ENCODE measurements at regions of chr4 and their contacts with region 1.

Region 1: DNA sequence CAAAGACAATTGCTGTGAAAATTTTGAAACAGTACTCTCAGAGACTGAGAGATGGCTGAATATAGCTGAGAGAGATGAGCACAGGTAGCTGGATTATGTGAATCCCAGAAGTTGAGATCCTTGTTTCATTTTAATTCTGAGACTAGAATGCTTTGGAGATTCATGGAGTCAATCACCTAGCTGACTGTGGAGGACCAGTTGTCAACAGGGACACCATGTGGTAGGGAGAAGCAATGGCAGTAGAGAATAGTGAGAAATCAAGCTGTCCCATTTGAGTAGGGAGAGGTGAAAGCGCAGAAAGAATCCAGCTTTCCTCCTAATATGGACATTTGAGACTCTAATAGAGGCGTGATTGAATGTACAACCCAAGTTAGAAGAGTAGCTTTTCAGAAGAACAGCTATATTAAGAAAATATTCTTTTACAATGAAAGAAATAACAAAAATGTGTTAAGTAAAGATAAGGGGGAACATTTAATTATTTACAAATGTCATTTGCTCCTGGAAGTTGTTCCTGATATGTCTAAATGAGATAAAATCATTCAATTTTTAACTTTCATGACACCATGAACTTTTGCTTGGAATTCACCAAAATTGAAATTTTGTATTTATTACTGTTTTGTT is 30.3 kb upstream of the GLRB start:
- DNase-seq: peak; percentile 84
- H3K4me3 Mint-ChIP-seq: no peak overlapping the region
- H3K27ac Mint-ChIP-seq: peak overlapping the region; percentile 55
- H3K4me1 Mint-ChIP-seq: peaks cover 22% of the 10 kb centered on the region
- H3K27me3 Mint-ChIP-seq: no peaks in the 10 kb centered on the region
- CTCF ChIP-seq: peak; percentile 89

Region 2: DNA sequence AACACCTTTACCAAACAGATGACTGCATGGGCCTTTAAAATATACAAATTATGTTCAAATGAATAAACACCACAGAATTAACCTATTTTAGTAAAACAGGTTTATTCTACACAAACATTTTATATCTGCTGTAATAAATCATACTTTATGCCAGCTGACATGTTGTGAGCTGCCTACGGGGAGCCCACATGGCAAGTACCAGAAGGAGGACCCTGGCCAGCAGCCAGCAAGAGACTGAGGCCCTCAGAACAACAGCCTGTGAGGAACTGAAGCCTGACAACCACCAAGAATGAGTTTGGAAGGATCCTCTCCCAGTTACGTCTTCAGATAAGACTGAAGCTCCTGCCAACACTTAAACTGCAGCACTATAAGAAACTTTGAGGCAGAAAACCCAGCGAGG is 451.0 kb before region 1 on chr4:
- CTCF ChIA-PET with region 1: interaction called, 3 read pairs
- POLR2A ChIA-PET with region 1: no interaction called
- intact Hi-C with region 1: loop called (anchors 2 kb)
- DNase-seq: peak; percentile 42
- H3K4me3 Mint-ChIP-seq: no peak overlapping the region
- H3K27ac Mint-ChIP-seq: peak overlapping the region; percentile 67
- H3K4me1 Mint-ChIP-seq: peaks cover 11% of the 10 kb centered on the region
- H3K27me3 Mint-ChIP-seq: no peaks in the 10 kb centered on the region
- CTCF ChIP-seq: no peak

Region 3: DNA sequence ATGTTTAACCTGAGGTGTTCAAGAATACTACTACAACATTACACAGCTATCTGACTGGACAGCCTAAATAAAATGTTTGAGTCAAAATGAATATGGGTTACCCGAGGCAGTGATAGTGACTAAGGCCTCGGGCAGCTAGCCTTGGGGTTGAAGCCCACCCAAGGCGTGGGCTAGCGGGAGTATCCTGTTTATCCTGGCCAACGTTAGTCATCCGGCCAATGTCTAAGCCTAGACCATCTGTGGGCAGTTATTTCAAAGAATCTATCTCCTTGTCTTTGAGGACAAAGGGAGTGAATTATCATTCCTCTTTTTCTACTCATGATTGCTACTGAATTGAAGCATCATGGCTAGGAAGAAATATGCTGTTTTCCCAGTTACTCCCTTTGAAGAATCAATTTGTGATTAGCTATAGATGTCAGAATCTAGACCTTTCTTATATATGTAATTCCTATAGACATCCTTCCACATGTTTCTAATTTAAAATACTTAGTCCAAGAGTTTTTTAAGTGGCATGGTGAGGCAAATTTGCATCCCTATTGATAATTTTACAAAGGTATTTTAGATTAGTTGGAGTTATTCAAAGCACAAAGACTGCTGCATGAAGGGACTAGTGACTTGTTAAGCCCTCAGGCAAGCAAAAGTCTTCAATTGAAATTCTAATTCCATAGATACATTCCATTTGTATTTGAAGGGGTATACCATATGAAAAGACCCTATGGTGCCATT is 68.0 kb before region 1 on chr4:
- CTCF ChIA-PET with region 1: interaction called, 61 read pairs
- POLR2A ChIA-PET with region 1: no interaction called
- intact Hi-C with region 1: no loop called
- DNase-seq: no peak
- H3K4me3 Mint-ChIP-seq: no peak overlapping the region
- H3K27ac Mint-ChIP-seq: peak overlapping the region; percentile 95
- H3K4me1 Mint-ChIP-seq: peaks cover 47% of the 10 kb centered on the region
- H3K27me3 Mint-ChIP-seq: no peaks in the 10 kb centered on the region
- CTCF ChIP-seq: no peak

Region 4: DNA sequence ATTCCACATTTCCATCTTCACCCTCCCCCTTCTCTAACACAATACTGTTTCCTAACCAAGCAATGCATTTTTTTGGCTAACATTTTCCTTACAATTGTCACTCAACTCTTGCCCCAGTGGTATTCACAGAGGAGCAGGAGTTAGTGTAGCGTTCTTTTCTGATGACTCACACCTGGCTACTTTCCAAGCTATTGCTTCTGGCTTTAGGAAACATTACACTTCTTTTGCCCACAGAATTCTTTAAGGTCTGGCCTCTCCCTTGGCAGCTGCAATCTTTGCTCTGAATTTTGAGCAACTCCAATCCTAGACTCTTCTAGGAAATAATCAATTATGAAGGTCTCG is 46.5 kb before region 1 on chr4:
- CTCF ChIA-PET with region 1: interaction called, 13 read pairs
- POLR2A ChIA-PET with region 1: interaction called, 3 read pairs
- intact Hi-C with region 1: no loop called
- DNase-seq: peak; percentile 99
- H3K4me3 Mint-ChIP-seq: peak overlapping the region; percentile 29
- H3K27ac Mint-ChIP-seq: peak overlapping the region; percentile 29
- H3K4me1 Mint-ChIP-seq: peaks cover 48% of the 10 kb centered on the region
- H3K27me3 Mint-ChIP-seq: no peaks in the 10 kb centered on the region
- CTCF ChIP-seq: no peak

Region 5: DNA sequence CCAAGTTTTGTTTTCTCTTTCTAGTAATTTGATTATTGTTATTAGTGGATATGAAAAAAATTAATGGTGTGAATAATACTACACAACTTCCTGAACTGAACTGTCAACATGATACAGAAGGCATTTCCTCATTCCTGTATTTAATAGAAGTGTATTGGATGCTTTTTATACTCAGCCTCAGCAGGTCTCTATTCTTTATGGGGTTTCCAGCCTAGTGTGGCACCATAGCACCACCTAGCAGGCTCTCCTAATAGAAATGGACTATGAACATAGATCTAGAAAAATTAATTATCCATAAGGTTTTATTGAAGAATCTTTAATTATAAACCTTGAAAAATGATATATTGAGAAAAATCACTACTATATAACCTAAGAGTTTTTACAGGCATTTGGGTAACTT is 82.8 kb after region 1 on chr4:
- CTCF ChIA-PET with region 1: interaction called, 10 read pairs
- POLR2A ChIA-PET with region 1: no interaction called
- intact Hi-C with region 1: loop called (anchors 1 kb)
- DNase-seq: peak; percentile 38
- H3K4me3 Mint-ChIP-seq: no peak overlapping the region
- H3K27ac Mint-ChIP-seq: no peak overlapping the region
- H3K4me1 Mint-ChIP-seq: no peaks in the 10 kb centered on the region
- H3K27me3 Mint-ChIP-seq: no peaks in the 10 kb centered on the region
- CTCF ChIP-seq: peak; percentile 64

Region 6: GRCh38 chr4:157421365-157421764 is 375.7 kb after region 1 on chr4:
- CTCF ChIA-PET with region 1: no interaction called
- POLR2A ChIA-PET with region 1: no interaction called
- intact Hi-C with region 1: no loop called
- DNase-seq: no peak
- H3K4me3 Mint-ChIP-seq: no peak overlapping the region
- H3K27ac Mint-ChIP-seq: no peak overlapping the region
- H3K4me1 Mint-ChIP-seq: no peaks in the 10 kb centered on the region
- H3K27me3 Mint-ChIP-seq: no peaks in the 10 kb centered on the region
- CTCF ChIP-seq: no peak